ENCODE measurements at regions of chr17 and their contacts with region 1.

Region 1: DNA sequence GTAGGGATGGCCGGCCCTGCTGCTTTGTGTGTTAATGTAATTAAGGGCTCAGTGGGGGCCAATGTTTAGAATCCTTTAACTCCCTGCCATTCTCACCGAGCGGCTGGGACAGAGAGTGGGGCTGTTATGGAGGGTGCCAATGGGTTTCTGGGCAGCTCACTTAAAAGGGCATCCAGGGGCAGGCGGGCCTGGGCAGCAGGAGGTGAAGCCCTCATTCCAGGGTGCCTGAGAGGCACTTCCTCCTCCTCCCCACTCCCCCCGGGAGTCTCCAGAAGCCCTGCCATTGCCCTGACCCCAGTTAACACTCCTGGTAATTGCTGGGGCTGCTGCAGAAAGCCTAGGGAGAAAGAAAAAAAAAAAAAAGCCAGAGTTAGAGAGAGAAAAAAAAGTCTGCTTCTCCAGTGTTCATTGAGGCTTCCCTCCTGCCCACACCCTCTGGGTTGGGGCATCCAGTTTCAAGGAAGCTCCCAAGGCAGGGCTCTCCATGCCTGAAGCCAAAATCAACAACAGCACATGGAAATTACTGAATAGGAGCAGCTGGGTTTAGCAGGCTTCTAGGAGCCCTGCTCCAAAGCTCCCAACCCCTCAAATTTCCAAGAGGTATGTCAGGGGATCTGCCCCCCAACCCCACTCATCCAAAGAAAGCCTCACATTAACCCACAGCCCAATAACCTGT is 28.0 kb downstream of the CUEDC1 start:
- DNase-seq: no peak
- H3K4me3 ChIP-seq: no peak overlapping the region
- CTCF ChIP-seq: no peak

Region 2: GRCh38 chr17:57875309-57876115 is 51.7 kb before region 1 on chr17:
- in situ Hi-C with region 1: no loop called
- DNase-seq: peak; percentile 96
- H3K4me3 ChIP-seq: no peak overlapping the region
- CTCF ChIP-seq: peak; percentile 54

Region 3: GRCh38 chr17:57984261-57984890 is 57.2 kb after region 1 on chr17:
- in situ Hi-C with region 1: loop called (anchors 5 kb)
- DNase-seq: no peak
- H3K4me3 ChIP-seq: no peak overlapping the region
- CTCF ChIP-seq: no peak